HCT116 (cell line): ENCODE measurements at regions of chr1 and their contacts with region 1.

Region 1: DNA sequence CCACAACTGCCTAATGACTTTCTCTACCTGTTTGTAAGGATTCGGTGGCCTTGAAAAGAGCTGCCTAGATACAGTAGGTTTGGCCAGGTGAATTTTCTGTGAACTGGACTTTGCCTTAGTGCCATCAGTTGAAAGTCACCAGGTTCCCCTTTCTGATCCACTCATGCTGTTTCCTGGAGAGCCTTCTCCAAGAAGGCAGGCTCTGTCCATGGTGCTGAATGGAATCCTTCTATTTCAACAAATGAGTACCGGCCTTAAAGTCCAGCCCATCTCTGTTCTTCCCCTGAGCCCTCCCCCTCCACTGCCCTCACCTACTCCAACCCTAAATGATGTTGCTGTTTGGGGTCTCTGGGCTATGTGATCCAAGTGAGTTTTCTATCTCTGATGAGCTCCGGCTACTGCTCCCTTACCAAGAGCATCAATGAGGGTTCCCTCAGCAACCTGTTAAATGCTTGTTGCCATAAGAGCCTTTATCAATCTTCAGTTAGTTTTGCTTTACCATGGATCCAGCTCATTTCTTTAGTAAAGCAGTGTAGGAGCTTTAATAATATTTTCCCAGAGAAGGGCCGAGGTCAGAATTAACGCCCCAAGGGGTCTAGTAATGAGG is 500.4 kb downstream of the PTPRU start:
- DNase-seq: no peak
- ATAC-seq: no peak
- H3K4me3 ChIP-seq: no peak overlapping the region
- H3K27ac ChIP-seq: no peak overlapping the region
- H3K4me1 ChIP-seq: peaks cover 0 to 4% of the 10 kb centered on the region in 2 experiments; a peak in 1 of 4 replicates
- H3K27me3 ChIP-seq: peaks cover 47% of the 10 kb centered on the region
- CTCF ChIP-seq: no peak
- POLR2A ChIP-seq: no peak
- RAD21 ChIP-seq: no peak

Region 2: GRCh38 chr1:29465755-29466154 is 270.9 kb before region 1 on chr1:
- CTCF ChIA-PET with region 1: no interaction called
- POLR2A ChIA-PET with region 1: no interaction called
- RAD21 ChIA-PET with region 1: no interaction called
- intact Hi-C with region 1: loop called (anchors 5 kb)
- DNase-seq: no peak
- ATAC-seq: no peak
- H3K4me3 ChIP-seq: no peak overlapping the region
- H3K27ac ChIP-seq: no peak overlapping the region
- H3K4me1 ChIP-seq: no peaks in the 10 kb centered on the region
- H3K27me3 ChIP-seq: peaks cover 36% of the 10 kb centered on the region
- CTCF ChIP-seq: no peak
- POLR2A ChIP-seq: no peak
- RAD21 ChIP-seq: no peak

Region 3: DNA sequence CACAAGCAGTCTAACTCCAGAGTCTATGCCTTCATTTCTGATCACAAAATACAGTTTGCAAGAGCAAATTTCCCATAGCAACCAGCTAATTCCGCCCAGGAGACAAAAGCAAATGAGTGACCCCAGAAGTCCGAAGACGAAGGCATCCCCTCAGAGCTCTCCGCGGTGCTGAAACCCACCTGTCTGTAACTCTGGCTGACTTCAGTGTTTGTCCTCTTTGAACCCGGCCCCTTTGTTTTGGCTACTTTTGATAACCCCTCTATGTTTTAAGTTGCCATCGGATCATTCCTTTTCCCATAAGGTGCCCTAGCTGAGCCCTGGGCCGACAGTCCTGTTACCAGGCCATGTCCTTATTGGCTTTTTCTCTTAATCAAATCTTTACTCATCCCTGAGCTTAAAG is 15.5 kb after region 1 on chr1:
- CTCF ChIA-PET with region 1: no interaction called
- POLR2A ChIA-PET with region 1: no interaction called
- RAD21 ChIA-PET with region 1: no interaction called
- intact Hi-C with region 1: no loop called
- DNase-seq: no peak
- ATAC-seq: no peak
- H3K4me3 ChIP-seq: no peak overlapping the region
- H3K27ac ChIP-seq: no peak overlapping the region
- H3K4me1 ChIP-seq: no peaks in the 10 kb centered on the region
- H3K27me3 ChIP-seq: peaks cover 8% of the 10 kb centered on the region
- CTCF ChIP-seq: no peak
- POLR2A ChIP-seq: no peak
- RAD21 ChIP-seq: no peak